ENCODE measurements at regions of chr3 and their contacts with region 1.

Region 1: GRCh38 chr3:43055806-43056770 is 49.8 kb downstream of the POMGNT2 start:
- DNase-seq: peak in 1 of 9 experiments; percentile 41
- ATAC-seq: no peak
- H3K4me3 ChIP-seq: no peak overlapping the region
- H3K4me3 Mint-ChIP-seq: no peak overlapping the region
- H3K27ac ChIP-seq: no peak overlapping the region
- H3K27ac Mint-ChIP-seq: no peak overlapping the region
- H3K4me1 ChIP-seq: peaks cover 16% of the 10 kb centered on the region
- H3K4me1 Mint-ChIP-seq: peaks cover 17% of the 10 kb centered on the region
- H3K27me3 ChIP-seq: no peaks in the 10 kb centered on the region
- H3K27me3 Mint-ChIP-seq: peaks cover 4% of the 10 kb centered on the region
- CTCF ChIP-seq: no peak

Region 2: DNA sequence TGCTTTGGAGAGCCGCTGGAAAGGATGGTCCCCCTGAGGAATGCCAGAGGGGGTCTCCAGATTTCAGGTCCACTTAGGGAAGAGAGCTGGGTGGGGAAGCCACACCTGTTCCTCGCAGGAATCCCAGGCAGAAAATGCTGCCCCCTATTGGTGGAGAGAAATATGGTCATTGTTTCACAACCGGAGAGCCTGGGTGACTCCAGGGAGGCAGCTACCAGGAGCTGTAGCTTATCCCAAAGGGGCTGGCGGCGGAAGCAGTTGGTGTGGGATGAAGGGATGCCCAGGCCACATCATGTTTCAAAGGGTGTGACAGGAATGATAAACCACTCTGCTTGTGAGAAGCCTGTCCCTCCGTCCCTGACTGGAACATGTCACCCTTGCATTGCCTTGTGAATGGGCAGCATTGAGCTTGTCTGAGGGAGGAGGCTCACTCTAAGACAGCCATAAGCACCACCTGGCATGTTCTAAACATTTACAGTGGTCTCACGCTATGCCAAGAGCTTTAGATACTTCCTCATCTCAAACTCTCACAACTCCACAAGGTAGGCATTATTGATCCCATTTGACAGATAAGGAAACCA is 15.3 kb after region 1 on chr3:
- CTCF ChIA-PET with region 1: interaction called, 10 read pairs
- POLR2A ChIA-PET with region 1: no interaction called
- intact Hi-C with region 1: no loop called
- DNase-seq: peak in 4 of 9 experiments; percentile 36 to 59 (median 53)
- ATAC-seq: no peak
- H3K4me3 ChIP-seq: no peak overlapping the region
- H3K4me3 Mint-ChIP-seq: no peak overlapping the region
- H3K27ac ChIP-seq: no peak overlapping the region
- H3K27ac Mint-ChIP-seq: no peak overlapping the region
- H3K4me1 ChIP-seq: no peaks in the 10 kb centered on the region
- H3K4me1 Mint-ChIP-seq: no peaks in the 10 kb centered on the region
- H3K27me3 ChIP-seq: no peaks in the 10 kb centered on the region
- H3K27me3 Mint-ChIP-seq: no peaks in the 10 kb centered on the region
- CTCF ChIP-seq: peak; percentile 60

Region 3: DNA sequence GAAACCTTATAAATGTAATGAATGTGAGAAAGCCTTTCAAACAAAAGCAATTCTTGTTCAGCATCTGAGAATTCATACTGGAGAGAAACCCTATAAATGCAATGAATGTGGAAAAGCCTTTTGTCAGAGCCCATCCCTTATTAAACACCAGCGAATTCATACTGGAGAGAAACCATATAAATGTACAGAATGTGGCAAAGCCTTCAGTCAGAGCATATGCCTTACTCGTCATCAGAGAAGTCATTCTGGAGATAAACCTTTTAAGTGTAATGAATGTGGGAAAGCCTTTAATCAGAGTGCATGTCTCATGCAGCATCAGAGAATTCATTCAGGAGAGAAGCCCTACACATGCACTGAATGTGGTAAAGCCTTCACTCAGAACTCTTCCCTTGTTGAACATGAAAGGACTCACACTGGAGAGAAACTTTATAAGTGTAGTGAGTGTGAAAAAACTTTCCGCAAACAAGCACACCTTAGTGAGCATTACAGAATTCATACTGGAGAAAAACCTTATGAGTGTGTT is 1678.6 kb after region 1 on chr3:
- CTCF ChIA-PET with region 1: no interaction called
- POLR2A ChIA-PET with region 1: no interaction called
- intact Hi-C with region 1: no loop called
- DNase-seq: no peak
- ATAC-seq: no peak
- H3K4me3 ChIP-seq: no peak overlapping the region
- H3K4me3 Mint-ChIP-seq: no peak overlapping the region
- H3K27ac ChIP-seq: no peak overlapping the region
- H3K27ac Mint-ChIP-seq: no peak overlapping the region
- H3K4me1 ChIP-seq: peaks cover 6% of the 10 kb centered on the region
- H3K4me1 Mint-ChIP-seq: peaks cover 7% of the 10 kb centered on the region
- H3K27me3 ChIP-seq: no peaks in the 10 kb centered on the region
- H3K27me3 Mint-ChIP-seq: no peaks in the 10 kb centered on the region
- CTCF ChIP-seq: no peak